Heart right ventricle (tissue), 16 donors: ENCODE measurements at regions of chr20 and their contacts with region 1.

Region 1: DNA sequence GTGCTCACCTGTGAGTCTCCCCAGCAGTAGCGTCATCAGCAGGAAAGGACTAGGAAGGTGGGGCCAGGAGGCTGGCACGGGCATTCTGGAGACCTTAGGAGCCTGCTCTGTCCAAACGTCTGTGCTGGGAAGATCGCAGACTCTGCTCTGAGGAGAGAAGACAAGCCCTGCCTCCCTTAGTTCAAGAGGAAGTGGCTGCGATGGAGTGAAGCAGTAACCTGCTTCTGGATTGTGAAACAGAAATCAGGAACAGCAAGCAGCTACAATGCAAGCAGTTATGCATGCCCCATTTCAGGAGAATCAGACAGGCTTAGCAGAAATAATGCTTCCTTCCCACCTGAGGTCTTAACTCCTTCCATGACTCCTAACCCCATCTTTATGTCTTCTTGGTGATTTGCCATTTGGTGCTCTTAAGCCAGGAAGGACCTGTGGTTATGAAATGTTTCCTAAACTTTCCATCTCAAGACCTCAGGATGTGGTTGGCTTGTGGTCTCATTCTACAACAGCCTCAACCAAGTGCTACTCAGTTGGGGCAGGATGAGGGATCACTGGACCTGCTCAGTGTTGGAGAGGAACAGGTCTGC is at the start of gene SIRPB1:
- DNase-seq: no peak
- ATAC-seq: peak in 6 of 8 donors; percentile 19 to 61 (median 50)
- H3K4me3 ChIP-seq: peak within 1 kb of the TSS in 1 of 10 donors; percentile 33
- H3K27ac ChIP-seq: peak within 1 kb of the TSS in 1 of 10 donors; percentile 89
- H3K4me1 ChIP-seq: peaks cover 0 to 73% (median 0%) of the 10 kb centered on the region in 9 donors
- H3K27me3 ChIP-seq: peaks cover 0 to 3% (median 0%) of the 10 kb centered on the region in 7 donors
- CTCF ChIP-seq: no peak
- total RNA-seq, gene SIRPB1: 0.37 to 6.9 (median 1.8) TPM in 9 of 10 donors, not detected in the other

Region 2: DNA sequence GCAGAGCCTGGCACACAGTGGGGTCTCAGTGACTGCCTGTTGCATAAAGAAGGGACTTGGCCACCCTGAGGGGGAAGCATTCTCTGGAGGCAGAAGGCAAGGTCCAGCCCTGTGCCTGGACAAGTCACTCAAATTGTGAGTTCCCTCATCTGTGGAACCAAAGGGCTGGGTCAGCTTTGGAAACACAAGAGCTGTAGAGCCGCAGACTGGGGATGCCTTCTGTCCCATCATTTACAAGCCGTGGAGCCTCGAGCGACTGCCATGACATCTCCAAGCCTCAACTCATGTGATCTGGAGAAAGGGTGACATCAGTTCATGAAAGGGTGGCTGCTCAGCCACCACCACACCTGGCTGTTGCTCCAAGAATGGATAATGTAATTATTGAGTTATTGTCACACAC is 42.0 kb before region 1 on chr20:
- intact Hi-C with region 1: loop called in 3 of 10 experiments (anchors 2 kb)
- DNase-seq: no peak
- ATAC-seq: no peak
- H3K4me3 ChIP-seq: no peak overlapping the region
- H3K27ac ChIP-seq: no peak overlapping the region
- H3K4me1 ChIP-seq: peaks cover 0 to 5% (median 0%) of the 10 kb centered on the region in 9 donors
- H3K27me3 ChIP-seq: no peaks in the 10 kb centered on the region
- CTCF ChIP-seq: no peak